CD4-positive, alpha-beta memory T cell (primary cell): ENCODE measurements at regions of chr6 and their contacts with region 1.

Region 1: DNA sequence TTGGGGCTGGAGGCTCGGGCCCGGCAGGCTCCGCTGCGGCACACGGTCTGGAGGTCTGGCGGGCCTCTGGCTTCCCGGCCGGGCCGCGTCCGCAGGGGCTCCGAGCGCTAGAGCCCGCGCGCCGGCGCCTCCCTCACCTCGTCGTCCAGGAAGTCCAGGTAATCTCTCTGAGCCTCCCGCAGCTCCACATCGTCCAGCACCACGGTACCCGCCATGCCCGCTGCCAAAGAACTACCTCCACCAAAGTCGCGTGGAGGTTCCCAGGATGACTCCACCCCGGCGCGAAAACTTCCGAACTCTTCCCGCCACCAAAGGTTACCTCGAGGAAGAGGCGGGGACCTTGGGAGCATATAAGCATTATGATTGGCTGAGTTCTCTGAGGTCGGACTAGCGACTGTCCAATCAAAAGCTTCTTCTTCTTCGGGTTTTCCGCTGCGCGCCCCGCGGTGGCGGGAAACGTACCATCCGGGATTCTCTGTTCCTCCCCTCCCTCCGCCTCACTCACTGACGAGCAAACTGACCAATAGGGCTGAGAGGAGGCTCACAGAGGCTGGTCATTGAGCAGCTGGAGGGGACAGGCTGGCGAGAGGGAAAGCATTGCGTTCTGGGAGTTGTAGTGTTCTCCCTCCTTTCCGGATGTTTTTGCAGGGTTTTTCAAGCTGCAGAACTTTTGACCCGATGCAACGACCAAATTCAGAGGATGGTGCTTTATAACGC is at the start of gene MCM3:
- DNase-seq: peak; percentile 96 to 99 (median 99)
- H3K4me3 ChIP-seq: peak within 1 kb of the TSS; percentile 74 to 77
- H3K4me3 Mint-ChIP-seq: peak within 1 kb of the TSS in 5 of 8 donors; percentile 60 to 80 (median 68)
- H3K27ac ChIP-seq: peak within 1 kb of the TSS; percentile 73
- H3K27ac Mint-ChIP-seq: peak within 1 kb of the TSS in 3 of 7 donors; percentile 18 to 89 (median 88)
- H3K4me1 ChIP-seq: peaks cover 47% of the 10 kb centered on the region
- H3K4me1 Mint-ChIP-seq: peaks cover 30 to 57% (median 36%) of the 10 kb centered on the region in 4 donors
- H3K27me3 ChIP-seq: no peaks in the 10 kb centered on the region
- H3K27me3 Mint-ChIP-seq: no peaks in the 10 kb centered on the region
- total RNA-seq, gene MCM3: 48.6 to 54.2 TPM

Region 2: DNA sequence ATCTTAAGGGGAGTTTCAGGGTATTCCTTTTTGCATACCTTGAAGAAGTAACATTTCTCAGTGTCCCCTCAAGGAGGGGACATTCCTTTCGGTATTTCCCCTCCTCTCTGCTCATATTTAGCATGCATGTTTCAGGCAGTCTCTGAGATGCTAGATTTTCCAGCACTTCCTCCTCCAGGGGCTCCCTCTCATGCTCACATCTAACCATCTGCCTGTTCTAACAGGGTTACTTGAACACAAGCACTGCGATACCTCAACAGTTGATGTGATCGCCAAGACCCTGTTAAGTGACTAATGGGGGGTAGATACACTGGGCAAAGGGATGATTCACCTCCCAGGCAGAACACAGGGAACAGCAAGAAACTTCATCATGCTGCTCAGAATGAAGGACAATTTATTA is 12.8 kb after region 1 on chr6:
- CTCF ChIA-PET with region 1: interaction called, 23 read pairs
- POLR2A ChIA-PET with region 1: interaction called, 124 read pairs
- intact Hi-C with region 1: loop called (anchors 1 kb)
- DNase-seq: peak in 1 of 5 donors; percentile 47
- H3K4me3 ChIP-seq: no peak overlapping the region
- H3K4me3 Mint-ChIP-seq: peak overlapping the region; percentile 78 to 91 (median 80)
- H3K27ac ChIP-seq: peak overlapping the region; percentile 69
- H3K27ac Mint-ChIP-seq: peak overlapping the region; percentile 22 to 99 (median 98)
- H3K4me1 ChIP-seq: peaks cover 39% of the 10 kb centered on the region
- H3K4me1 Mint-ChIP-seq: peaks cover 23 to 62% (median 36%) of the 10 kb centered on the region in 4 donors
- H3K27me3 ChIP-seq: no peaks in the 10 kb centered on the region
- H3K27me3 Mint-ChIP-seq: no peaks in the 10 kb centered on the region

Region 3: DNA sequence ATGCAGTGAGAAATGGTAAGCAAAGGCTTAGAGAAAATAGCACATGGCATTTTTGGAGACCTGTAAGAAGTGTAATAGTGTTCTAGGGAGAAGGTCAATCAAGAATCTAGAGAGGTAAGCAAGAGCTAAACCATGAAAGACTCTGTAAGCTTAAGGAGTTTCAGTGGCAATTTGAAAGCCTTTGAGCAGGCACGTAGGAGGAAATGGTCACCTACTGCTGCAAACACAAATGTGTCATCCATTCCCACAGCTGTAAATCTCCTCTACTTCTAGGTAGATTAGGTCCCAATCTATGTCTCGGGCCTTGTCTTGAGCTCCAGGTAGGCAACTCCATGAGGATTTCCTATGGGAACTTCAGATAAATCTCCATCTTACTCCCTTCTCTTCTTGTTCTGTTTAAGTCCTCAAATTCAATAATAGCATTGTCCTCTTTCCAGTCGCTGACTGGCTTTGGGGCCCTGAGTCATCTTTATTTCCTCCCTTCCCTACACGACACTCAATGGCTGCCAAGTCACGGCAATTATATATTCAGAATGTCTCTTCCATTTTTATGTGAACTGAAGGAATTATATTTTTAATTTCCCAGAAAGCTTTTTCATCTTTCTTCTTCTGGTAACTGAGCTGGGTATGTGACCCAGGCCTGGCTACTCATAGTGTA is 53.1 kb after region 1 on chr6:
- CTCF ChIA-PET with region 1: interaction called, 26 read pairs
- POLR2A ChIA-PET with region 1: interaction called, 57 read pairs
- intact Hi-C with region 1: loop called (anchors 2 kb)
- DNase-seq: no peak
- H3K4me3 ChIP-seq: no peak overlapping the region
- H3K4me3 Mint-ChIP-seq: peak overlapping the region in 1 of 8 donors; percentile 48
- H3K27ac ChIP-seq: no peak overlapping the region
- H3K27ac Mint-ChIP-seq: peak overlapping the region in 5 of 7 donors; percentile 38 to 86 (median 66)
- H3K4me1 ChIP-seq: peaks cover 60% of the 10 kb centered on the region
- H3K4me1 Mint-ChIP-seq: peaks cover 43 to 67% (median 53%) of the 10 kb centered on the region in 4 donors
- H3K27me3 ChIP-seq: no peaks in the 10 kb centered on the region
- H3K27me3 Mint-ChIP-seq: no peaks in the 10 kb centered on the region

Region 4: GRCh38 chr6:52389626-52390360 is 105.2 kb after region 1 on chr6:
- CTCF ChIA-PET with region 1: interaction called, 116 read pairs
- POLR2A ChIA-PET with region 1: interaction called, 78 read pairs
- intact Hi-C with region 1: loop called (anchors 2 kb)
- DNase-seq: peak; percentile 66 to 85 (median 69)
- H3K4me3 ChIP-seq: peak overlapping the region; percentile 14 to 34
- H3K4me3 Mint-ChIP-seq: peak overlapping the region; percentile 77 to 92 (median 82)
- H3K27ac ChIP-seq: peak overlapping the region; percentile 80
- H3K27ac Mint-ChIP-seq: peak overlapping the region; percentile 95 to 99 (median 97)
- H3K4me1 ChIP-seq: peaks cover 90% of the 10 kb centered on the region
- H3K4me1 Mint-ChIP-seq: peaks cover 67 to 94% (median 81%) of the 10 kb centered on the region in 4 donors
- H3K27me3 ChIP-seq: no peaks in the 10 kb centered on the region
- H3K27me3 Mint-ChIP-seq: no peaks in the 10 kb centered on the region

Region 5: GRCh38 chr6:52419809-52420670 is 135.4 kb after region 1 on chr6 and contains the start of gene EFHC1:
- CTCF ChIA-PET with region 1: interaction called, 58 read pairs
- POLR2A ChIA-PET with region 1: interaction called, 37 read pairs
- intact Hi-C with region 1: loop called (anchors 1 kb)
- DNase-seq: peak; percentile 97 to 98 (median 97)
- H3K4me3 ChIP-seq: peak within 1 kb of the TSS; percentile 71
- H3K4me3 Mint-ChIP-seq: no peak within 1 kb of the TSS
- H3K27ac ChIP-seq: peak within 1 kb of the TSS; percentile 59
- H3K27ac Mint-ChIP-seq: peak within 1 kb of the TSS in 3 of 7 donors; percentile 69 to 94 (median 85)
- H3K4me1 ChIP-seq: peaks cover 24% of the 10 kb centered on the region
- H3K4me1 Mint-ChIP-seq: peaks cover 12 to 21% (median 16%) of the 10 kb centered on the region in 4 donors
- H3K27me3 ChIP-seq: no peaks in the 10 kb centered on the region
- H3K27me3 Mint-ChIP-seq: no peaks in the 10 kb centered on the region
- total RNA-seq, gene EFHC1: 6.4 to 10.4 TPM

Region 6: DNA sequence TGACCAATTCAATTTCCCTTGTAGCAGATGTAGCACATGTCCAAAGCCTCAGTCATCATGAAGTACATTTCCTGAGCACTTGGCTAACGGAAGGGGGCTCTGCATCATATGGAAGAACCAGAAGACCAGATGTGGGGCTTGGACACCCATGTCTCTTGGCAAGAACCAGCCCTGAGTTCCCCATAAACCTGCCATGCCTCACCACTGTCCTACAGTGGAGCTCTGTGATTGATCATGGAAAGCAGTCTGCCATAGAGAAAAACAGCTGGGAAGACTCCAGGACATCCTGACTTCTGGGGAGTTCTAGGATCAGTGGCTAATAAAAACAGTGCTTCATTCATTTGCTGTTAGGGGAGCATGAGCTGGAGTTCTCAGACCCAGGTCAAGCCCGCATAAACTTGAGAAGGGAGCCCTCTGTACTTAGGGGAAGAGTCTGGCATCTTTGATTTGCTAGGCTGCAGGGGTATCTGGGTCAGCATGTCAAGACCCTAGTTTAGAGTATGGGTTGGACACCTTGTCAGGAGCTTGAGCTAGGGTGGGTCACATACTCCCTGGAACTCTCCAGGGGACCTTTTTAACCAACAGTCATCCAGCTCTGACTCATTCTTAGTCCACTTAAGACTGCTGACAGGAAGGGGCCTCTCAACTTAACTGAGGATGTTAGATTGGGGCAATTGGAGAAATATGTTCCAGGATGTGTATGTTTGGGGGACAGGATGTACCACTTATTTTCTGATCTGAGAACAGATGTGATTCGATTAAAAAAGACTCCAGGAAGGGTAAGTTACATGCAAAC is 318.6 kb after region 1 on chr6:
- CTCF ChIA-PET with region 1: no interaction called
- POLR2A ChIA-PET with region 1: no interaction called
- intact Hi-C with region 1: no loop called
- DNase-seq: no peak
- H3K4me3 ChIP-seq: no peak overlapping the region
- H3K4me3 Mint-ChIP-seq: no peak overlapping the region
- H3K27ac ChIP-seq: no peak overlapping the region
- H3K27ac Mint-ChIP-seq: no peak overlapping the region
- H3K4me1 ChIP-seq: no peaks in the 10 kb centered on the region
- H3K4me1 Mint-ChIP-seq: no peaks in the 10 kb centered on the region
- H3K27me3 ChIP-seq: no peaks in the 10 kb centered on the region
- H3K27me3 Mint-ChIP-seq: peaks cover 3 to 10% of the 10 kb centered on the region in 2 donors

Region 7: GRCh38 chr6:52664186-52664990 is 379.8 kb after region 1 on chr6:
- CTCF ChIA-PET with region 1: interaction called, 15 read pairs
- POLR2A ChIA-PET with region 1: interaction called, 4 read pairs
- intact Hi-C with region 1: loop called (anchors 1 kb)
- DNase-seq: peak; percentile 37 to 56 (median 44)
- H3K4me3 ChIP-seq: peak overlapping the region; percentile 48 to 66
- H3K4me3 Mint-ChIP-seq: no peak overlapping the region
- H3K27ac ChIP-seq: peak overlapping the region; percentile 2
- H3K27ac Mint-ChIP-seq: no peak overlapping the region
- H3K4me1 ChIP-seq: peaks cover 13% of the 10 kb centered on the region
- H3K4me1 Mint-ChIP-seq: peaks cover 0 to 1% (median 0%) of the 10 kb centered on the region in 4 donors
- H3K27me3 ChIP-seq: no peaks in the 10 kb centered on the region
- H3K27me3 Mint-ChIP-seq: peaks cover 1 to 2% of the 10 kb centered on the region in 2 donors

Region 8: DNA sequence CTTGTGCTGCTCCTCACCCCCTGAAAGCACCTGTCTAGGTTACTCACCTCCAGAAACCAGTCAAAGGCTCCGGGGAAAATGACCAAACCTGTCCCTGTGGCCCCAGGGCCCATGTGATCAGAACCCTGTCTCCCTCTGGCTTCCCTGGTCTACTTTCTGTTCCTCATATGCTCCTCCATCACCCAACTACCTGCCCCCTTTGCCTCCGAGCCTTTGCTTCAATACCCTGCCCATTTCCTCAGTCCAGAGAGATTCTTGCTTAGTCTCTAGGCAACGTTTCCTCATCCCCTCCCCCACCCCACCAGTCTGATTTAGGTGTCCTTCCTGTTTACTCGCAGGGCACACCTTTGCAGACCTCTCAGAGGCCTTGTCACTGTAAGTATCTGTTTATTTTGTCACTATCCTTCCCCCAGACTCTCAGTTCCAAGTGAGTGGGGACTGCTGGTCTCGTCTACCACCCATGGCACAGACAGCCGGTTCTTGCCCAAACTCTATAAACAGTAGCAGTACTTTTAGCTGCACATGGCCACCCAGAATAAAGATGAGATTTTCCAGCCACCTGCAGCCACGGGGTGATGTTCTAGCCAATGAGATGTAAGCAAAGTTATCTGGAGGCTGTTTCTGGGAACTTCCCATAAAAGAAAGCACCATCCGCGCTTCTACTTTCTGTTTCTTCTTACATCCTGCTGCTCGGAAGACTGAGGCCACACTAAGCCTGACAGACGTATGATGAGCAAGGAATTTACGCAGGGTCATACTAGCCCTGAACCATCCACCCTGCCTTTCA is 1050.8 kb after region 1 on chr6:
- CTCF ChIA-PET with region 1: no interaction called
- POLR2A ChIA-PET with region 1: no interaction called
- intact Hi-C with region 1: loop called (anchors 5 kb)
- DNase-seq: peak; percentile 80 to 92 (median 86)
- H3K4me3 ChIP-seq: peak overlapping the region; percentile 32 to 66
- H3K4me3 Mint-ChIP-seq: peak overlapping the region; percentile 85 to 96 (median 91)
- H3K27ac ChIP-seq: peak overlapping the region; percentile 88
- H3K27ac Mint-ChIP-seq: peak overlapping the region; percentile 95 to 100 (median 99)
- H3K4me1 ChIP-seq: peaks cover 96% of the 10 kb centered on the region
- H3K4me1 Mint-ChIP-seq: peaks cover 80 to 94% (median 87%) of the 10 kb centered on the region in 4 donors
- H3K27me3 ChIP-seq: no peaks in the 10 kb centered on the region
- H3K27me3 Mint-ChIP-seq: no peaks in the 10 kb centered on the region